Ascending aorta (tissue), 2 donors: ENCODE measurements at regions of chr1 and their contacts with region 1.

Region 1: GRCh38 chr1:108828022-108828961 is 28.6 kb downstream of the AKNAD1 start:
- DNase-seq: peak in 1 of 2 donors; percentile 90
- H3K4me3 ChIP-seq: peak overlapping the region in 1 of 2 donors; percentile 28
- H3K27ac ChIP-seq: peak overlapping the region; percentile 79 to 88
- H3K4me1 ChIP-seq: peaks cover 0 to 26% of the 10 kb centered on the region in 2 donors
- H3K27me3 ChIP-seq: no peaks in the 10 kb centered on the region
- CTCF ChIP-seq: peak; percentile 70 to 82 (median 70)

Region 2: DNA sequence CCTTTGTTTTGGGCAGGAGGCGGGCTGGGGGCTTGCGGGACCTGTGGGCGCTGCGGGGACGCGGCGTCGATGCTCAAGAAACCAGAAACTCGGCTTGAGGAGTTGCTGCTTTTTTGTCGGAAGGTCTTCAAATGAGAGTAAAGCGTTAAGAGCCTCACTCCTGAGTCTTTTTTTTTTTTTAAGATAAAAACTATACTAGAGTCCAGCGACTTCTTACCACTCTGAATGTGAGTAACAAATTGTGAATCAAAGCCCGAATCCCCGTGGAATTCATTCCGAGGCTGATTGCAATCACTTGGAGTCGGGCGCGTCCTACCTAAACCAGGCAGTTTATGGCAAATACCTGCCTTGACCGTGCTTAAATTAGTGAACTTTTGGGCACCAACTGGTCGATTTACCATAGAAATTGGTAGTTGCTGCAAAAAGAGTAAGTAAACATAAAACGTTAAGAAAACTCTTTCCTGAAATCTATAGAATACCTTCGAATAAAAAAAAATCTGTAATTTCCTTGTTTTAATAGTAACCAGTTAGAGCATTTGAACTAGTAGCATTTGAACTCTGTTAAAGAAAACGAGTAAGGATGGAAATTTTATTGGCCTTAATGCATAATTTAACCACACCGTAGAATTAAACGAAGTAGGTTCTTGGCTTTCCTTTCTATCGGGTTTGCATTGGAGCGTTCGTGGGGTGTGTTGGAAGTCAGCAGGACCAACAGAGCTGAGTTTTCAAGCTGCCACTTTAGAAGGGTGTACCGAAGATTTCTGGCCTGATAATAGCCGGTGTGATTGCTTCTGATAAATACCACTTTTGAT is 49.3 kb after region 1 on chr1:
- intact Hi-C with region 1: loop called (anchors 2 kb)
- DNase-seq: no peak
- H3K4me3 ChIP-seq: peak overlapping the region; percentile 58 to 87
- H3K27ac ChIP-seq: peak overlapping the region; percentile 58 to 64
- H3K4me1 ChIP-seq: peaks cover 0 to 11% of the 10 kb centered on the region in 2 donors
- H3K27me3 ChIP-seq: no peaks in the 10 kb centered on the region
- CTCF ChIP-seq: no peak

Region 3: DNA sequence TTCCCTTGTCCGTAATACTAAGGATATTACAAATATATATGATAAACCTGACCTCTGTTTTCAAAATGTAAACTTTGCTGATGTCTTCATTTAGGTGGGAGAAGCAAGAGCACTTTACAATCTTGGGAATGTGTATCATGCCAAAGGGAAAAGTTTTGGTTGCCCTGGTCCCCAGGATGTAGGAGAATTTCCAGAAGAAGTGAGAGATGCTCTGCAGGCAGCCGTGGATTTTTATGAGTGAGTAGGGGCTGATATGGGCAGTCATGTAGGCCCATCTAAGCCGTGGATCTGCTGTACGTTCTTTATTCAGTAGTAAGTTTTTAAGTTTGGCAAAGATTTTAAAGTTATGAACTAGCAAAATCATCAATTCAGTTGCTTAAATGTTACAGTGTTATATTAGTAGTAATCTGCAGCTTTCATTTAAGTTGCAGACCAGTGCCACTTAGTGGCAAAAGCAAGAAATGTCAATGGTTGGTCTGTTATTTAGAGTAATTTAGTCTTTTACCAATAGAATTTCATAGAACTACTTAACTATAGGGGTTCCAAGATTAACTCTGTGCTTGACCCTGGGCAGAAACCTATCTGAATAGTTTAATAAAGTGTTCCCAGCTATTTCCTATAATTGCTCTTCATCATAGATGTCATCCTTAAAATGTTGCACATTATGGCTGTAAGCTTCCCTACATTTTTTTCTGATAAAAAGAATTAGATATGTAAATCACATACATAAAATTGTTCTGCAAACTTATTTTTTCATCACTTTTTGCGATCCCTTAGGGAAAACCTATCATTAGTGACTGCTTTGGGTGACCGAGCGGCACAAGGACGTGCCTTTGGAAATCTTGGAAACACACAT is 69.8 kb after region 1 on chr1:
- intact Hi-C with region 1: loop called (anchors 1 kb)
- DNase-seq: no peak
- H3K4me3 ChIP-seq: no peak overlapping the region
- H3K27ac ChIP-seq: no peak overlapping the region
- H3K4me1 ChIP-seq: no peaks in the 10 kb centered on the region
- H3K27me3 ChIP-seq: no peaks in the 10 kb centered on the region
- CTCF ChIP-seq: peak; percentile 61 to 71 (median 71)